Right cardiac atrium (tissue), 5 donors: ENCODE measurements at regions of chr17 and their contacts with region 1.

Region 1: GRCh38 chr17:29155227-29155965 is 24.8 kb downstream of the MYO18A start:
- DNase-seq: peak; percentile 56 to 78 (median 74)
- ATAC-seq: peak; percentile 65 to 84
- H3K4me3 ChIP-seq: no peak overlapping the region
- H3K27ac ChIP-seq: peak overlapping the region; percentile 74
- H3K4me1 ChIP-seq: peaks cover 47% of the 10 kb centered on the region
- H3K27me3 ChIP-seq: no peaks in the 10 kb centered on the region

Region 2: GRCh38 chr17:29283271-29283895 is 128.0 kb after region 1 on chr17:
- intact Hi-C with region 1: loop called in 1 of 4 experiments (anchors 10 kb)
- DNase-seq: no peak
- ATAC-seq: no peak
- H3K4me3 ChIP-seq: no peak overlapping the region
- H3K27ac ChIP-seq: no peak overlapping the region
- H3K4me1 ChIP-seq: peaks cover 9% of the 10 kb centered on the region
- H3K27me3 ChIP-seq: no peaks in the 10 kb centered on the region

Region 3: DNA sequence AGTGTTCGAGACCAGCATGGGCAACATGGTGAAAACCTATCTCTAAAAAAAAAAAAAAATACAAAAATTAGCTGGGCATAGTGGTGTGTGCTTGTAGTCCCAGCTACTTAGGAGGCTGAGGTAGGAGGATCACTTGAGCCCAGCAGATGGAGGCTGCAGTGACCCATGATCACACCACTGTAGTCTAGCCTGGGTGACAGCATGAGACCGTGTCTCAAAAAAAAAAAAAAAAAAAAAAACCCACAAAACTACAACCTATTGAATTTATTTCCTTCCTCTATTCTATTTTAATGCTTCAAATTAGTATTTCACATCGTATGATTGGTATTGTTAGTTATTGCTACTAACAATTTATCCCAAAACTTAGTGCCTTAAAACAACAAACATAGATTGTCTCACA is 148.0 kb after region 1 on chr17:
- intact Hi-C with region 1: no loop called
- DNase-seq: no peak
- ATAC-seq: no peak
- H3K4me3 ChIP-seq: no peak overlapping the region
- H3K27ac ChIP-seq: no peak overlapping the region
- H3K4me1 ChIP-seq: no peaks in the 10 kb centered on the region
- H3K27me3 ChIP-seq: no peaks in the 10 kb centered on the region

Region 4: GRCh38 chr17:29357821-29358232 is 202.4 kb after region 1 on chr17:
- intact Hi-C with region 1: no loop called
- DNase-seq: no peak
- ATAC-seq: no peak
- H3K4me3 ChIP-seq: no peak overlapping the region
- H3K27ac ChIP-seq: no peak overlapping the region
- H3K4me1 ChIP-seq: no peaks in the 10 kb centered on the region
- H3K27me3 ChIP-seq: no peaks in the 10 kb centered on the region